HEK293 (cell line): ENCODE measurements at regions of chr5 and their contacts with region 1.

Region 1: GRCh38 chr5:139968547-139969261 is 74.4 kb downstream of the NRG2 start:
- H3K4me3 ChIP-seq: no peak overlapping the region
- H3K27ac ChIP-seq: no peak overlapping the region
- H3K4me1 ChIP-seq: no peaks in the 10 kb centered on the region; the same call in 1 of the 2 replicates
- CTCF ChIP-seq: peak; percentile 100

Region 2: GRCh38 chr5:139633295-139634027 is 335.2 kb before region 1 on chr5:
- CTCF ChIA-PET with region 1: interaction called, 37 read pairs
- POLR2A ChIA-PET with region 1: no interaction called
- H3K4me3 ChIP-seq: no peak overlapping the region
- H3K27ac ChIP-seq: no peak overlapping the region
- H3K4me1 ChIP-seq: peaks cover 2% of the 10 kb centered on the region; the same call in 1 of the 2 replicates
- CTCF ChIP-seq: peak; percentile 96

Region 3: GRCh38 chr5:139711067-139711905 is 257.4 kb before region 1 on chr5:
- CTCF ChIA-PET with region 1: no interaction called
- POLR2A ChIA-PET with region 1: no interaction called
- H3K4me3 ChIP-seq: peak overlapping the region; percentile 41
- H3K27ac ChIP-seq: peak overlapping the region; percentile 29; the same call in 1 of the 2 replicates
- H3K4me1 ChIP-seq: 0 out of 2 replicates have a peak, but pooled peaks cover 3% of the 10 kb centered on the region
- CTCF ChIP-seq: peak; percentile 21; the same call in 1 of the 2 replicates

Region 4: GRCh38 chr5:139806726-139807646 is 161.7 kb before region 1 on chr5:
- CTCF ChIA-PET with region 1: interaction called, 13 read pairs
- POLR2A ChIA-PET with region 1: no interaction called
- H3K4me3 ChIP-seq: no peak overlapping the region
- H3K27ac ChIP-seq: no peak overlapping the region
- H3K4me1 ChIP-seq: no peaks in the 10 kb centered on the region
- CTCF ChIP-seq: no peak

Region 5: GRCh38 chr5:139872052-139872766 is 96.5 kb before region 1 on chr5:
- CTCF ChIA-PET with region 1: interaction called, 85 read pairs
- POLR2A ChIA-PET with region 1: no interaction called
- H3K4me3 ChIP-seq: no peak overlapping the region
- H3K27ac ChIP-seq: no peak overlapping the region
- H3K4me1 ChIP-seq: no peaks in the 10 kb centered on the region
- CTCF ChIP-seq: no peak

Region 6: GRCh38 chr5:139919308-139919707 is 49.4 kb before region 1 on chr5:
- CTCF ChIA-PET with region 1: interaction called, 27 read pairs
- POLR2A ChIA-PET with region 1: no interaction called
- H3K4me3 ChIP-seq: no peak overlapping the region
- H3K27ac ChIP-seq: no peak overlapping the region
- H3K4me1 ChIP-seq: no peaks in the 10 kb centered on the region
- CTCF ChIP-seq: no peak

Region 7: DNA sequence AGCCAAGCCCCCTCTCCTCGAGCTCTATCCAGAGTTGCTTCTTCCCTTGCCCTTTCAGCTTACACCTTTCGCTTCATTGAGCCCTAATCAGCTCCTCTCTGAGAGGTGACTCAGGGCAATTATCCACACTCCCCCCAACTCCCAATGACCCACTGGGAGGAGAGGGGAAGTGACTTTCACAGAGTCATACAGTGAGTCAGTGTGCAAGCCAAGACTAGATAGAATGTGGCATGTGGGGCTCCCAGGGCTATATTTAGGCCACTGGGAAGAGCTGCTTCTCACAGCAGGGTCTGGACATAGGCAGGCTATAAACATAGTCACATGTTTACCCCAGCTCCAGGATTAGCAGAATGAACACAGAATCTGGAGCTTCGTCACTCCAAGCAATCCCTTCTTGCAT is 17.0 kb after region 1 on chr5:
- CTCF ChIA-PET with region 1: interaction called, 104 read pairs
- POLR2A ChIA-PET with region 1: no interaction called
- H3K4me3 ChIP-seq: no peak overlapping the region
- H3K27ac ChIP-seq: no peak overlapping the region
- H3K4me1 ChIP-seq: peaks cover 7% of the 10 kb centered on the region; the same call in 1 of the 2 replicates
- CTCF ChIP-seq: no peak

Region 8: DNA sequence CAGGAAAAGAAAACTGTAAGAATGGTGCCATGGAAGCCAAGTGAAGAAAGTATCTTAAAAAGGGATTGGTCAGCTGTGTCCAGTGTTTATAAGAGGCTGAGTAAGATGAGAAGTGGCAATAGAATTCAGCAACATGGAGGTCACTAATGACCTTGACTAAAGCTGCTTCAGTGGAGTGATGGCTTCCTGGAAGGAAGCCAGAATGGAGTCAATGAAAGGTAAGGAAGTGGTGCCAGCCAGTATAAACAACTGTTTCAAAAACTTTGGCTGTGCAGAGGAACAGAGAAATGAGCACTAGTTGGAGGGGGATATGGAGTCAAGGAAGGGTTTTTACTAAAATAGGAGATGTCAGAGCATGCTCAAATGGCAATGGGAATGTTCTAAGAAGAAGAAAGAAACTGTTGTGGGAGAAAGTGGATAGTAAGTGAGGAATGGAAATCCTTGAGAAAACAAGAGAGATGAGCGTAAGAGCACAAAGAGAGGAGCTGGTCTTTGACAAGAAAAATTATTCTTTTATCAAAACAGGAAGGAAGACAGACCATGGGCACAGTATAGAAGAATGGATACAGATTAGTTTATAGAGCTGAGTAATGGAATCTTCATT is 85.5 kb after region 1 on chr5:
- CTCF ChIA-PET with region 1: interaction called, 14 read pairs
- POLR2A ChIA-PET with region 1: no interaction called
- H3K4me3 ChIP-seq: no peak overlapping the region
- H3K27ac ChIP-seq: no peak overlapping the region
- H3K4me1 ChIP-seq: peaks cover 9% of the 10 kb centered on the region
- CTCF ChIP-seq: no peak